SK-N-SH (cell line): ENCODE measurements at regions of chr14 and their contacts with region 1.

Region 1: DNA sequence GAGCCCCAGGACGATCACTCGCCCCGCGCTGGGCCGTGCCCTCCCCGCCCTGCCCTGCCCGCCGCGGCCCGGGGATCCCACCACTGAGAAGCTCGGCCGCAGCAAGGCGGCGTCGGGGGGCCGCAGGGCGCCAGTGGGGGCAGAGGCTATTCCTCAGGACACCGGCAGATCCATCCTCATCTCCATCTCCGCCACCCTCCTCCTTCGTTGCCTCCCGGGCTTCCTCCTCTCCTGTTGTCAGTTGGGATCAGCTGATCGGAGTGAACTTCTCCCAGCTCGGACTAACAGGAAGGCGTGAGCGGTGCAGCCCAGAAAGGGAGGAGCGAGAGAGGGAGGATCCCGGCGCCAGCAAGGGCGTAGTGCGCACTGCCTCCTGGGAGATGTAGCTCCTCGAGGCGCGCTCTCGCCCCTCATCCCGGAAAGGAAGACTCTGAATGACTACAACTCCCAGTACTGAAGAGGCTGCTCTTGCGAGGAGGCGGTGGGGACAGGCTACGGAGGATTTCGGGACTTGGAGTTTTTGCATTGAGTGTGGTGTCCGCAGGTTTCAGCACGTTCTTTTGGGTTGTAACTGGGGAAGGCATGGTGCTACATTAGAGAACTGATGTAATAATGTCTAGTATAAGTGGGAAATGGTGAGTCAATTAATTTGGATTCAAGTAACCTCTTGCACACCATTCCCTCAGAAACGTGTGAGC is at the start of gene ZFYVE1:
- DNase-seq: peak; percentile 93
- H3K4me3 ChIP-seq: peak within 1 kb of the TSS; percentile 68 to 95
- H3K27ac ChIP-seq: peak within 1 kb of the TSS; percentile 70 to 79
- H3K4me1 ChIP-seq: peaks cover 0 to 7% of the 10 kb centered on the region in 2 experiments; a peak in 1 of 4 replicates
- H3K27me3 ChIP-seq: no peaks in the 10 kb centered on the region
- CTCF ChIP-seq: no peak
- EP300 ChIP-seq: no peak
- RAD21 ChIP-seq: no peak
- polyA plus RNA-seq, gene ZFYVE1: 18.6 and 23.6 TPM in 2 replicates

Region 2: GRCh38 chr14:73058224-73058921 is 31.4 kb after region 1 on chr14 and contains the start of gene RBM25:
- CTCF ChIA-PET with region 1: interaction called, 3 read pairs
- POLR2A ChIA-PET with region 1: interaction called, 16 read pairs
- DNase-seq: peak; percentile 92
- H3K4me3 ChIP-seq: peak within 1 kb of the TSS; percentile 80 to 100
- H3K27ac ChIP-seq: peak within 1 kb of the TSS; percentile 94
- H3K4me1 ChIP-seq: peaks cover 6 to 13% of the 10 kb centered on the region in 2 experiments; a peak in 3 of 4 replicates
- H3K27me3 ChIP-seq: no peaks in the 10 kb centered on the region
- CTCF ChIP-seq: no peak
- EP300 ChIP-seq: peak in 1 of 2 experiments; percentile 41; a peak in 1 of 4 replicates
- RAD21 ChIP-seq: peak; percentile 34; the same call in 1 of the 2 replicates
- polyA plus RNA-seq, gene RBM25: 14.0 and 15.5 TPM in 2 replicates